ENCODE measurements at regions of chr2 and their contacts with region 1.

Region 1: DNA sequence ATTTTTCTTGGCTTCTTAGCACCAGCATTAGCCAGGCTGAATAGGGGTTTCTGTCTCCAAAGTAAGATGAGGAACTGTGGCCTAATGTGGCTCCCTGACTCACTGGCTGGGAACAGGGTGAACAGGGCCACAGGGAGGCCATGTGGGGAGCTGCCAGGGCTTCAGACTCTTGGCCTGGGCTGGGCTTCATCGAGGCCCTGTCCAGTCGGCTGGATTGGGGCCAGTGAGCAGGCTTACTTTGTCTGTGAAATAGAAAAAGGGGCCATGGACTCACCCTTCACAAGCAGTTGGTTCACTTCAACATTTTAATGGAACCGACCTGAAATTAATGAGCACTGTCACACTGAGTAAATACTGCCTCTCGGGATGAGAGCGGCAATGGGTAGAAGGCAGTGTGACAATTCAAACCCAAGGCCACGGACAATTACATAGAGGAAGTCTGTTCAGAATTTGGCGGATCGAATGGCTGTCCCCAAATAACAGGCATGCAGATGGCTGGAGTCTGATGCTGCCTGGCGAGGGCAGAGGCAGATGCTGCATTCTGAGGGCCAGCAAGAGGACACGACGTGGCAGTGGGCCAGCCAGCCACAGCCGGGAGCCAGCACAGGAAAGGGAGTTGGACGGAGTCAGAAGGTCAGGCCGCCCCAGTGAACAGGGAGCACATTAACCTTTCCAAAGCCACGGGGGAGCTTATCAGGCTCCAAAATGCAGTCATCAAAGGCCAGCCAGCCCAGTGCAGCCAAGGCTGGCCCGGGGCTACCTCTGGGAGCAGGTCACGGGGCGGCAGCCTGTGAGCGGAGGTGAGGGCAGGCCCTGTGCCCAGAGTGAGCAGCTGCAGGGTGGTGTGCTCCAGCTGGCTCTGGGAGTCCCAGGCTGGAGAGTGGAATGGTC is 146.6 kb upstream of the REV1 start:
- DNase-seq: peak; percentile 56 to 75
- ATAC-seq: peak; percentile 83 to 88
- H3K4me3 ChIP-seq: peak overlapping the region in 3 of 4 donors; percentile 26 to 35 (median 27)
- H3K27ac ChIP-seq: peak overlapping the region; percentile 47 to 73 (median 60)
- H3K4me1 ChIP-seq: peaks cover 22 to 24% of the 10 kb centered on the region in 2 donors
- H3K27me3 ChIP-seq: no peaks in the 10 kb centered on the region
- CTCF ChIP-seq: no peak
- POLR2A ChIP-seq: no peak

Region 2: DNA sequence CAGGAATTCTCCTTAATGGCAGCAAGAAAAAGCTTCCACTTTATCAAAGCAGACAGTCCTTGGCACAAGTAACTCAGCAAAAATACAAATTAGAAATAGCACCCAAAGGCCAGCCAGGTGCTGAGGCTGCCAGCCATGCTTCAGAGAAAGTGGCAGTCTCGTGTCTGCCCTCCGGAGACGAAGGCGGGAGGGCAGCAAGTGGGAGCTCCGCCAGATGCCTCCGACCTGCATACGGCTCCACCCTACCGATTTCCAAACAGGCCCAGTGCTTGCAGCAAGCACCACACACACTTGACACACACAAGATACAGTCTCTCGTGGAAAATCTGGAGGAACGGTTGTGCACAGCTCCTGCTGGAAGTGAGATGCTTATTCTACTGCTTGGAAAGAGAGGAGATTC is 11.7 kb before region 1 on chr2:
- in situ Hi-C with region 1: no loop called
- intact Hi-C with region 1: no loop called
- DNase-seq: no peak
- ATAC-seq: no peak
- H3K4me3 ChIP-seq: no peak overlapping the region
- H3K27ac ChIP-seq: no peak overlapping the region
- H3K4me1 ChIP-seq: no peaks in the 10 kb centered on the region
- H3K27me3 ChIP-seq: no peaks in the 10 kb centered on the region
- CTCF ChIP-seq: no peak
- POLR2A ChIP-seq: no peak

Region 3: GRCh38 chr2:99660616-99661406 is 24.4 kb after region 1 on chr2:
- in situ Hi-C with region 1: no loop called
- intact Hi-C with region 1: loop called (anchors 2 kb)
- DNase-seq: no peak
- ATAC-seq: no peak
- H3K4me3 ChIP-seq: no peak overlapping the region
- H3K27ac ChIP-seq: peak overlapping the region in 3 of 4 donors; percentile 4 to 32 (median 31)
- H3K4me1 ChIP-seq: peaks cover 9 to 17% of the 10 kb centered on the region in 2 donors
- H3K27me3 ChIP-seq: no peaks in the 10 kb centered on the region
- CTCF ChIP-seq: no peak
- POLR2A ChIP-seq: no peak

Region 4: DNA sequence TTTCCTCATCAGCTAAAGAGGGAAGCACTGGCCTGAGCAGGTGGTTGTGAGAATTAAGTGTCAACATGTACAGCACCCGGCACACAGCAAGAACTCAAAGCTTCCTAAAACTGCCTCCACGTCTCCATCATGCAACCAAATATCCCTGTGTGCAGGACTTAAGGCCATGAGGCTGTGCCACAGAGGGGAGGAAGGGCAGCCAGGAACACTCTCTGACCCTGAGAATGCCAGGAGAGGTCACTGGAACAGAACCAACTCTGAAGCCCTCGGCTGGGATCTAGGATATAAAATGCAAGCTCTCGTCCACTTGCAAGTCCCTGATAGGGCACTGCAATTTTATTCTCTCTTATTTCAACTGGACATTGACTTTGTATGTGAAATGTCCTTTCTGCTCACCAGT is 1171.3 kb after region 1 on chr2:
- in situ Hi-C with region 1: no loop called
- intact Hi-C with region 1: loop called (anchors 5 kb)
- DNase-seq: no peak
- ATAC-seq: peak in 1 of 2 donors; percentile 30
- H3K4me3 ChIP-seq: no peak overlapping the region
- H3K27ac ChIP-seq: no peak overlapping the region
- H3K4me1 ChIP-seq: peaks cover 0 to 14% of the 10 kb centered on the region in 2 donors
- H3K27me3 ChIP-seq: no peaks in the 10 kb centered on the region
- CTCF ChIP-seq: no peak
- POLR2A ChIP-seq: no peak

Measured in gastrocnemius medialis (tissue), 4 donors.